ENCODE measurements at regions of chr12 and their contacts with region 1.

Region 1: DNA sequence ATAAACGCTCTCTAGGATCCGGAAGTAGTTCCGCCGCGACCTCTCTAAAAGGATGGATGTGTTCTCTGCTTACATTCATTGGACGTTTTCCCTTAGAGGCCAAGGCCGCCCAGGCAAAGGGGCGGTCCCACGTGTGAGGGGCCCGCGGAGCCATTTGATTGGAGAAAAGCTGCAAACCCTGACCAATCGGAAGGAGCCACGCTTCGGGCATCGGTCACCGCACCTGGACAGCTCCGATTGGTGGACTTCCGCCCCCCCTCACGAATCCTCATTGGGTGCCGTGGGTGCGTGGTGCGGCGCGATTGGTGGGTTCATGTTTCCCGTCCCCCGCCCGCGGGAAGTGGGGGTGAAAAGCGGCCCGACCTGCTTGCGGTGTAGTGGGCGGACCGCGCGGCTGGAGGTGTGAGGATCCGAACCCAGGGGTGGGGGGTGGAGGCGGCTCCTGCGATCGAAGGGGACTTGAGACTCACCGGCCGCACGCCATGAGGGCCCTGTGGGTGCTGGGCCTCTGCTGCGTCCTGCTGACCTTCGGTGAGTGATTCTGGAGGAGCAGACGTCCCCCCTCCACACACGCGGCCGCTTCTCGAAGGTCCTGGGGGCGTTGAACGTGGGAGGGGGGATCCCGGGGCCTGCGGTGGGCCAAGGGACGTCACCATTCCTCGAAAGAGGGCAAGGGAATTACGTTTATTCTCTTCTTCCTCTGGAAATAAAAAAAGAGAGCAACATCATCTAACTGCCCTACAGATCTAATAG is at the start of gene HSP90B1:
- DNase-seq: peak; percentile 100
- H3K4me3 ChIP-seq: peak within 1 kb of the TSS; percentile 81 to 99
- H3K27ac ChIP-seq: peak within 1 kb of the TSS; percentile 95 to 97
- H3K4me1 ChIP-seq: peaks cover 9 to 29% of the 10 kb centered on the region in 2 donors
- H3K27me3 ChIP-seq: no peaks in the 10 kb centered on the region
- CTCF ChIP-seq: no peak
- total RNA-seq, gene HSP90B1: 250 TPM

Region 2: GRCh38 chr12:103705927-103706326 is 224.3 kb before region 1 on chr12:
- intact Hi-C with region 1: no loop called
- DNase-seq: no peak
- H3K4me3 ChIP-seq: no peak overlapping the region
- H3K27ac ChIP-seq: no peak overlapping the region
- H3K4me1 ChIP-seq: no peaks in the 10 kb centered on the region
- H3K27me3 ChIP-seq: no peaks in the 10 kb centered on the region
- CTCF ChIP-seq: no peak

Region 3: GRCh38 chr12:103771466-103771865 is 158.7 kb before region 1 on chr12:
- intact Hi-C with region 1: loop called (anchors 5 kb)
- DNase-seq: no peak
- H3K4me3 ChIP-seq: no peak overlapping the region
- H3K27ac ChIP-seq: peak overlapping the region in 1 of 2 donors; percentile 24
- H3K4me1 ChIP-seq: peaks cover 5 to 13% of the 10 kb centered on the region in 2 donors
- H3K27me3 ChIP-seq: no peaks in the 10 kb centered on the region
- CTCF ChIP-seq: peak in 1 of 3 experiments; percentile 50

Region 4: GRCh38 chr12:103884316-103884715 is 45.9 kb before region 1 on chr12:
- intact Hi-C with region 1: loop called (anchors 2 kb)
- DNase-seq: no peak
- H3K4me3 ChIP-seq: no peak overlapping the region
- H3K27ac ChIP-seq: no peak overlapping the region
- H3K4me1 ChIP-seq: no peaks in the 10 kb centered on the region
- H3K27me3 ChIP-seq: no peaks in the 10 kb centered on the region
- CTCF ChIP-seq: peak in 2 of 3 experiments; percentile 40 to 62

Region 5: GRCh38 chr12:103956516-103957027 is 26.4 kb after region 1 on chr12:
- intact Hi-C with region 1: loop called (anchors 1 kb)
- DNase-seq: no peak
- H3K4me3 ChIP-seq: peak overlapping the region; percentile 87 to 93
- H3K27ac ChIP-seq: peak overlapping the region; percentile 84 to 85
- H3K4me1 ChIP-seq: peaks cover 0 to 19% of the 10 kb centered on the region in 2 donors
- H3K27me3 ChIP-seq: no peaks in the 10 kb centered on the region
- CTCF ChIP-seq: no peak

Region 6: DNA sequence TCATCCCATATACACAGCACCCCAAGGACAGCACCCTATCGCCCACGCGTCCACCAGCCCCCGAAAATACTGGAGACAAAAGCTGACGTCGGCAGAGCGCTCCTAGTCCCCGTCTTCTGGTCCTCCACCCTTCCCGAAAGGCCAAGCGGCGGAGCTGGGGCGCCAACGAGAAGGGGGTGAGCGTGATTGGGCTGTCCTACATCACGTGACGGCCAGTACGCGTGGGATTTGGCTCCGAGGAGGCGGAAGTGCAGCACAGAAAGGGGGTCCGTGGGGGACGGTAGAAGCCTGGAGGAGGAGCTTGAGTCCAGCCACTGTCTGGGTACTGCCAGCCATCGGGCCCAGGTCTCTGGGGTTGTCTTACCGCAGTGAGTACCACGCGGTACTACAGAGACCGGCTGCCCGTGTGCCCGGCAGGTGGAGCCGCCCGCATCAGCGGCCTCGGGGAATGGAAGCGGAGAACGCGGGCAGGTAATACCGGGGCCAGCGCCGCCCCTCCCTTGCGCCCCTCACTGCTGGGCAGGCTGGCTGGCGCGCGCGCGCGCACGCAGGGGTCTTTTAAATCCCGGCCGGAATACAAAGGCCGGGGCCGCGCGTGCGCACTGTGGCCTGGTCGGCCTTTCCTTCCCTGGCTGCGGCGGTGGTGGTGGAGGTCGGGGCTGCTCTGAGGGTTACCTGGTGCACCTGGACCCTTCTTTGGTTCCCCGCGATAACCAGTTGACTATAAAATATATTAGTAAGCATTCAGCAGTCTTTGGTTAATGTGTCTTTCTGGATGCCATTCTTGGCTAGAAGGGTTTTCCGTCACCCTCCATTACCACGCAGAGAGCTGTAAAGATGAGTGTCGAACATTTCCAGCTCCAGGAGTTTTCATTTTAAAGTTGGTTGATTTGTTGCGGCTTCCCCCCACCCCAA is 35.6 kb after region 1 on chr12 and contains the start of gene TDG:
- intact Hi-C with region 1: loop called (anchors 1 kb)
- DNase-seq: peak; percentile 95 to 99
- H3K4me3 ChIP-seq: peak within 1 kb of the TSS; percentile 77 to 81
- H3K27ac ChIP-seq: peak within 1 kb of the TSS; percentile 93 to 95
- H3K4me1 ChIP-seq: peaks cover 4 to 54% of the 10 kb centered on the region in 2 donors
- H3K27me3 ChIP-seq: no peaks in the 10 kb centered on the region
- CTCF ChIP-seq: peak in 2 of 3 experiments; percentile 15 to 32
- total RNA-seq, gene TDG: 11.8 TPM

Region 7: DNA sequence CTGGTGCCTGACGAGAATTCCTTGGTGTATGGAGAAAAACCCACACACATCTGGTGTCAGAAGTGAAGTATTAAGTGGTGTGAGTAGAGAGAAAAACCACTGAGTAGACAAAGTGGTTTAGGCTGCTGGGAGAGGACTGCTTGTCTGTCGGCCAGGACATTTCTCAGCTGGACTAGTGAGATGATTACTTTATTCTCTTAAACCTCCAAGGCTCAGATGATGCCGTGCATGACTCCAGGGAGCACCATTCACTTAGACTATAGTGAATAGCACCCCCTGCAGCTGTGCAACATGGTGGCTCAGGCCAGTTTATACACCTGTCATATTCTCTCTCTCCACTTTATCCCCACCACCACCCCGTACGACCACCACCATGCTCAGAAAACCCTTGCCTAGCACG is 236.3 kb after region 1 on chr12:
- intact Hi-C with region 1: no loop called
- DNase-seq: no peak
- H3K4me3 ChIP-seq: no peak overlapping the region
- H3K27ac ChIP-seq: no peak overlapping the region
- H3K4me1 ChIP-seq: no peaks in the 10 kb centered on the region
- H3K27me3 ChIP-seq: no peaks in the 10 kb centered on the region
- CTCF ChIP-seq: no peak

Measured in ascending aorta (tissue), 2 donors.